ENCODE measurements at regions of chr21 and their contacts with region 1.

Region 1: DNA sequence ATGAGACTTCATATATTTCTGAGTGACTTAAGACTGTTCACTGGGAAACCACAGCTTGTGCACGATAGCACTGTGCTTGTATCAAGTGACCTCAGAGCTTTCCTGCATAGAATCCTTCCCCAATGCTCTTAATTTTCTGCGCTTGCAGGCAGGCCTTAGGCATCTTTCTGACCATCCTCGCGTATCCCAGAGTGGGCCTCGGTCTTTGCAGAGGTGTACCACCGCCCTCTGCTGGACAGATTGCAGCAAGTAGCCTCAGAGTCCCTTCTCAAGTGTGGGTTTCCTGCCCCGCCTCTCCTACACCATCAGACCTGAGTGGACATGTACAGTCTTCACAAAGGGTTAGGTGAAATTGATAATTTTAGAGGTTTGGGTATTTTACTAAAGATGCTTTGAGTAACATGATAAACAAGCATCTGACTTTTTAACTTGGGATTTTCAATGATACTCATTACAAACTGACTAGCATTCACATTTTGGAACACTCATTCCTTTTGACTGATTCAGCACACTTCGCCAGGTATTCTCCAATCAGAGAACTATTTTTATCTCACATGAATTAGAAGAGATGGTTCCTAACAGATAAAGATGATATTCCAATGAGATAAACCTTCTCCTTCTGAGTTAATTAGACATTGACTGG is 246.5 kb upstream of the USP25 start:
- DNase-seq: peak; percentile 88
- H3K4me3 ChIP-seq: no peak overlapping the region
- CTCF ChIP-seq: peak; percentile 87

Region 2: GRCh38 chr21:14877570-14878228 is 605.6 kb before region 1 on chr21:
- in situ Hi-C with region 1: loop called (anchors 10 kb)
- DNase-seq: no peak
- H3K4me3 ChIP-seq: no peak overlapping the region
- CTCF ChIP-seq: no peak

Region 3: DNA sequence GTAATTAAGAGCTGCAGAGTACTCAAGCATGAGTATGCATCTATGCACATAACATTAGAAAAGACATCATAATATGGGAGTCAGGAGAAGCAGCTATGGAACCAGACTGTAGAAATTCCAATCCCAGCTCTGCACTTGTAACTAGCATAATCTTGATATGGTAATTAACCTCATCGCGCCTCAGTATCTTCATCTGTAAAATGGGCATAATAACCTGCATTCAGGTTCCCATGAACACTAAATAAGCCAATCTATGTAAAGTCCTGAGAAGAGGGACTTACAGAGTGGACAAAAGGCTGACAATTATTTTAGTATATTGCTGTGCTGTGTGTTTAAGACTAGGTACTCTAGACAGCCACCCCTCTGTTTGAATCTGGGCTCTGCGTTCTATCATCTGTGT is 72.4 kb before region 1 on chr21:
- in situ Hi-C with region 1: no loop called
- DNase-seq: no peak
- H3K4me3 ChIP-seq: no peak overlapping the region
- CTCF ChIP-seq: no peak

Region 4: DNA sequence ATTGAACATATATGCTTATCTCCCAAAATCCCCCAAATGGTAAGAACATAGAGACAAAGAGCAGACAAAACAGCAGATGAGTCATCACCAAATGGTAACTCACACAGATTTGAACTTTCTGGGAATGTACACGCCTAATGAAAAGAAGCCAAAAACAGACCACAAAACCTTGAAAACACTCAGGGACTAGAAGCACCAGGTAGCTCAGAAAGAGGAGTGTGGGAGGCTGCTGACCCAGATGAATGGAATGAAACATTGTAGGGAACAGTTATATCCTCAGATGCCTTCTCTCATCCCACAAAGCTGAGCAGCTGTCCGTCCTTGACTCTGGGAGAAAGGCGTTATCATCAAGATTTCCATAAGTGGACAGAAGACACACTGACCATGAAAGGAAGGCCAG is 60.5 kb before region 1 on chr21:
- in situ Hi-C with region 1: no loop called
- DNase-seq: peak; percentile 92
- H3K4me3 ChIP-seq: no peak overlapping the region
- CTCF ChIP-seq: no peak